Activated CD4-positive, alpha-beta memory T cell treated with anti-CD3 and anti-CD28 coated beads for 36 hours (primary cell): ENCODE measurements at regions of chr16 and their contacts with region 1.

Region 1: GRCh38 chr16:31476303-31477219 is 4.6 kb downstream of the TGFB1I1 start:
- DNase-seq: peak; percentile 94
- H3K4me3 Mint-ChIP-seq: peak overlapping the region; percentile 75
- H3K27ac Mint-ChIP-seq: peak overlapping the region; percentile 51
- H3K4me1 Mint-ChIP-seq: peaks cover 18% of the 10 kb centered on the region
- H3K27me3 Mint-ChIP-seq: peaks cover 12% of the 10 kb centered on the region

Region 2: DNA sequence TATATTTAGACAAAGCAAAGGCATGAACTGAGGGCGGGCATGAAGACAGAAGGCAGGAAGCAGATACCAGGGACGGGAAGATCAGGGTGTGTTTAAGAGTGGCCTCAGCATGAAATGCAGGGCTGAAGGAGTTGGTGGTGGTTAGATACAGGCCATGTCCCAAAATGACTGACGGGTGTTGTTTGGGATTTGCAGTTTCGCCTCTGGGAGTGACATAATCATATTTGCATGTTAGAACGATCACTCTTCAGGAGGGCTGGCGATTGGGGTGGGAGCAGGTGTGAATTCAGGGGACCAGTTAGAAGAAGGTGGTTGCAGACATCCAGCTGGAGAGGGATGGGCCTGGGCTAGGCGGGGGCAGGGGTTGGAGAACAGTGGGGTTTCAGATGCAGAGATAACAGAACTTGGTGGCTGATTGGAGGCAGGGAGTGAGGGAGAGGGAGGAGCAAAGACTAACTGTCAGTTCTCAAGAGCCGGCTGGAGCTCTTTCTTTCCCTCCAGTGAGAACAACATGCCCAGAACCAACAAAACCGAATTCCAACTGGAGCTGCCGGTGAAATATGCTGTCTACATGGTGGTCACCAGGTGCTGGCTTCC is 148.8 kb before region 1 on chr16:
- CTCF ChIA-PET with region 1: no interaction called
- POLR2A ChIA-PET with region 1: no interaction called
- intact Hi-C with region 1: no loop called
- DNase-seq: no peak
- H3K4me3 Mint-ChIP-seq: no peak overlapping the region
- H3K27ac Mint-ChIP-seq: no peak overlapping the region
- H3K4me1 Mint-ChIP-seq: peaks cover 8% of the 10 kb centered on the region
- H3K27me3 Mint-ChIP-seq: peaks cover 23% of the 10 kb centered on the region

Region 3: DNA sequence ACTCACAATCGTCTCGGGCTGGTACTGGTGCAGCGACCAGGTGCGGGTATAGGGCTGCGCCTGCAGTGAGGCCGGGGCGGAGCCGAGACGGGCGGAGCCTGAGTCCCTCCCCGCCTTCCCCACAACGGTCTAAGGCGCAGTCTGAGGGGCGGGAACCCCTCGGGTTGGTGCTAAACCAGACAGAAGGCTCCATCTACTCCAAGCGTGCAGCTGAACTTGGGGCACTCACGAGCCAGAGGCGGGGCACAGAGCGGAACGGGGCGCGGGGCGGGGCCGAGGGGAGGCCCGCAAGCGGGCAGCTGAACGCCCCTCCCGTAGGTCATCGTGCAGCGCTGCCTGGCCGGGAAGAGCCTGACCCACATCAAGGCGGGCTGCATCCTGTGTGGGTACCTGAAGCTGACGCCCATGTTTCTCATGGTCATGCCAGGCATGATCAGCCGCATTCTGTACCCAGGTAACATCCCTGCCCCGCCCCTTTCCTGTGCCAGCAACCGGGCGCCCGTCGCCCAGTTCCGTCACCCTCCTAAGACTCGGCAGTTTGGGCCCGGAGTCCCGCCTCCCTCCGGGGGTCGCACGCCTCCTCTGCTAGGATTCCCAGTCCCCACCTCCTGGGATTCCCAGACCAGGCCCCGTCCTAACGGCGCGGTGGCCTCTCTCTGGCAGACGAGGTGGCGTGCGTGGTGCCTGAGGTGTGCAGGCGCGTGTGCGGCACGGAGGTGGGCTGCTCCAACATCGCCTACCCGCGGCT is 11.3 kb after region 1 on chr16:
- CTCF ChIA-PET with region 1: interaction called, 3 read pairs
- POLR2A ChIA-PET with region 1: interaction called, 9 read pairs
- intact Hi-C with region 1: loop called (anchors 1 kb)
- DNase-seq: peak; percentile 74
- H3K4me3 Mint-ChIP-seq: peak overlapping the region; percentile 84
- H3K27ac Mint-ChIP-seq: no peak overlapping the region
- H3K4me1 Mint-ChIP-seq: peaks cover 6% of the 10 kb centered on the region
- H3K27me3 Mint-ChIP-seq: no peaks in the 10 kb centered on the region

Region 4: GRCh38 chr16:31507929-31508705 is 31.6 kb after region 1 on chr16 and contains the start of gene RUSF1:
- CTCF ChIA-PET with region 1: no interaction called
- POLR2A ChIA-PET with region 1: interaction called, 11 read pairs
- intact Hi-C with region 1: loop called (anchors 2 kb)
- DNase-seq: peak; percentile 92
- H3K4me3 Mint-ChIP-seq: peak within 1 kb of the TSS; percentile 93
- H3K27ac Mint-ChIP-seq: peak within 1 kb of the TSS; percentile 94
- H3K4me1 Mint-ChIP-seq: peaks cover 44% of the 10 kb centered on the region
- H3K27me3 Mint-ChIP-seq: no peaks in the 10 kb centered on the region
- total RNA-seq, gene RUSF1: 40.9 to 41.2 TPM